Ovary (tissue), 10 donors: ENCODE measurements at regions of chr4 and their contacts with region 1.

Region 1: GRCh38 chr4:85901500-85901899 is 426.6 kb downstream of the ARHGAP24 start:
- DNase-seq: no peak
- H3K4me3 ChIP-seq: no peak overlapping the region
- H3K27ac ChIP-seq: no peak overlapping the region
- H3K4me1 ChIP-seq: no peaks in the 10 kb centered on the region
- H3K27me3 ChIP-seq: no peaks in the 10 kb centered on the region
- CTCF ChIP-seq: no peak
- EP300 ChIP-seq: no peak
- POLR2A ChIP-seq: no peak

Region 2: GRCh38 chr4:85769009-85769408 is 132.5 kb before region 1 on chr4:
- intact Hi-C with region 1: loop called in 1 of 4 experiments (anchors 5 kb)
- DNase-seq: no peak
- H3K4me3 ChIP-seq: no peak overlapping the region
- H3K27ac ChIP-seq: no peak overlapping the region
- H3K4me1 ChIP-seq: no peaks in the 10 kb centered on the region
- H3K27me3 ChIP-seq: no peaks in the 10 kb centered on the region
- CTCF ChIP-seq: no peak
- EP300 ChIP-seq: no peak
- POLR2A ChIP-seq: no peak